WTC11 (cell line): ENCODE measurements at regions of chr16 and their contacts with region 1.

Region 1: DNA sequence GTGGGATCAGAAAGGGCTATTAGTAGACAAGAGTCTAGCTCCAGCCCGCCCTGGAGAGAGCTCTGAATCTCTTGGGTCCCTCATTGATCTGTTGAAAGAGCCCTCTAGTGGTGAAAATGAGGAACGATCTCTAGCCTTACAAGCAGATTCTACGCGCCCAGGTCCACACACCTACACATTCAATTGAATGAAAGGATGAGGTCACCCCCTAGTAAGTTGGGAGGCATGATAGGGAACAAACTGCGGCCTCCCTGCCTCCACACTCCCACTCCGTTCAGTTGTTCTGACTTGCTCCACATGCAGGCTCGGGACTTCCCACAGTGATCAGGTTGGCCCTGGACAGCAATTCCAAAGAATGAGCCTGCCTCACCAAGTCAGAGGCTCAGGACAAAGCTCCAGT is 2.9 kb upstream of the CACNG3 start:
- DNase-seq: peak; percentile 58
- ATAC-seq: peak; percentile 76
- H3K4me3 Mint-ChIP-seq: no peak overlapping the region
- H3K27ac Mint-ChIP-seq: no peak overlapping the region
- H3K4me1 Mint-ChIP-seq: peaks cover 28% of the 10 kb centered on the region
- H3K27me3 Mint-ChIP-seq: peaks cover 40% of the 10 kb centered on the region
- CTCF ChIP-seq: peak; percentile 79

Region 2: DNA sequence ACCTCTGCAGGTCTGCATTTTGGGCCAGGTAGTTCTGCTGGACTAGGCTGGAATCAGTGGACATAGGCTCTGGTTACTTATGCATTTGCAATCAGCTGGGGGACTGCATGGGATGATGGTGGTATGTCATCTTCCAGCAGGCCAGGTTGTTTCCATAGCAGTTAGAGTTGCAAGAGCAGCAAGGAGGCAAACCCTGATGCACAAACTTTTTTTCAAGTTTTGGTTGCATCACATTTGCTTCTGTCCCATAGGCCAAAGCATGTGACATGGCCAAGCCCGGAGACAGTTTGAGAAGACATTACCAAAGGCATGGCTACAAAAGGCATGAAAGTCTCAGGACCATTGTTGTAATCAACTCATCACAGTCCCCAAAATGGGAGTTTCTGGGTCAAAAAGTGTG is 359.2 kb before region 1 on chr16:
- CTCF ChIA-PET with region 1: no interaction called
- POLR2A ChIA-PET with region 1: no interaction called
- DNase-seq: no peak
- ATAC-seq: no peak
- H3K4me3 Mint-ChIP-seq: no peak overlapping the region
- H3K27ac Mint-ChIP-seq: no peak overlapping the region
- H3K4me1 Mint-ChIP-seq: no peaks in the 10 kb centered on the region
- H3K27me3 Mint-ChIP-seq: peaks cover 6% of the 10 kb centered on the region
- CTCF ChIP-seq: no peak

Region 3: DNA sequence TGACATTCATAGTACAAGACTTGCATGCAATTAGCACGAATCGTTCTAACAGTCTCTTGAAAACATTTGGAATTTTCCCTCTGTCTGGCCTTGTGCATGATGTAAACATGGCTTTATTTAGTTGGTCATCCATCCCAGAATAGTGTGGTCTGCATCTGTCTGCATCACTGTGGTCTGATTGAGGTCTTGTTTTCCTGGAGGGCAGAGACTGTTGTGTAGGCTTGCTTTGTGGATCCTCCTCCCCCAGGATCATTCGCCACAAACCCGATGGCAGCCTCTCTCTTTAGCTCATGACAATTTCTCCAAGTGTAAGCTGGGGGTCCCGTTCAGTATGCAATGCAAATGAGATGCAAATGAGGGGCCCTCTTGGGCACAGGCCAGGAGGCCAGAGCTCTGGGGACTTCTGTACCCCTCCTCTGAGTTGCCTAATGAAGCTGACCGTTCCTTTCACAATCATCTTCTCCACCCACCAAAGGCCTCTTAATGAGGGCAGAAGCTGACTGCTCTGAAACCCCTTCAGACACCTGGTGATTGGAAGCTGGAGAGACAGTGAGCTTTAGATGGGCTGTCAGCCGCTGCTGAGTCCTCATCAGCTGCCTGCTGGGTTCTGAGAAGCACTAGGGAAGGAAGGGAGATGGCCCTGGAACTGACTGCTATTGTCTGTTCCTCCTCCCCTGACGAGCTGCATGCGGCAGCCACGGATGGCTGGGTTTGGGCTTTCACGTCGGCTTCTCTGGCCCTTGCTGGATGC is 198.3 kb before region 1 on chr16:
- CTCF ChIA-PET with region 1: interaction called, 18 read pairs
- POLR2A ChIA-PET with region 1: no interaction called
- DNase-seq: peak; percentile 46
- ATAC-seq: peak; percentile 76
- H3K4me3 Mint-ChIP-seq: no peak overlapping the region
- H3K27ac Mint-ChIP-seq: peak overlapping the region; percentile 35; the same call in 1 of the 2 replicates
- H3K4me1 Mint-ChIP-seq: peaks cover 68% of the 10 kb centered on the region
- H3K27me3 Mint-ChIP-seq: no peaks in the 10 kb centered on the region; the same call in 1 of the 2 replicates
- CTCF ChIP-seq: no peak

Region 4: GRCh38 chr16:24102209-24102660 is 151.0 kb before region 1 on chr16:
- CTCF ChIA-PET with region 1: interaction called, 20 read pairs
- POLR2A ChIA-PET with region 1: no interaction called
- DNase-seq: peak; percentile 28
- ATAC-seq: peak; percentile 54
- H3K4me3 Mint-ChIP-seq: no peak overlapping the region
- H3K27ac Mint-ChIP-seq: peak overlapping the region; percentile 45; the same call in 1 of the 2 replicates
- H3K4me1 Mint-ChIP-seq: peaks cover 61% of the 10 kb centered on the region
- H3K27me3 Mint-ChIP-seq: no peaks in the 10 kb centered on the region; the same call in 1 of the 2 replicates
- CTCF ChIP-seq: no peak

Region 5: GRCh38 chr16:24163935-24164334 is 89.3 kb before region 1 on chr16:
- CTCF ChIA-PET with region 1: interaction called, 23 read pairs
- POLR2A ChIA-PET with region 1: no interaction called
- DNase-seq: no peak
- ATAC-seq: peak; percentile 66; the same call in 1 of the 2 replicates
- H3K4me3 Mint-ChIP-seq: no peak overlapping the region
- H3K27ac Mint-ChIP-seq: peak overlapping the region; percentile 73; the same call in 1 of the 2 replicates
- H3K4me1 Mint-ChIP-seq: peaks cover 25% of the 10 kb centered on the region
- H3K27me3 Mint-ChIP-seq: no peaks in the 10 kb centered on the region
- CTCF ChIP-seq: no peak

Region 6: DNA sequence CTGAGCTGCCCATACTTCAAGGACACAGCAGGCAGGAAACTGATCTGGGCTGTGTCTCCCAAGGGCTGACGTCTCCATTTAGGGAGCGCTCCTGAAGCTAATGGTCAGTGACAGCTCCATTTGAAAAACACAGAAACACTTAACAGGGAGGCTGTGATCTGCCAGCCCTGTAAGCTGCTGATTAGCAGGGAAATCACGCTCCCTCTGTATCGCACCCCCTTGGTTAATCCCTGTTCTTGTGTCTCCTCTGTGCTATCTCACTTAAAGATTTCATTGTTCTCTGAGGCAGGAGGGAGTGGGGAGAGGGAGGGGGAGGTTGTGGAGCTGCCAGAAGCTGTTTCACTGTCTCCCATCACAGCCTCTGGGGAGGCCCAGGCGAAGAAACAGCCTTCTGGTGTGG is 44.5 kb before region 1 on chr16:
- CTCF ChIA-PET with region 1: interaction called, 21 read pairs
- POLR2A ChIA-PET with region 1: interaction called, 6 read pairs
- DNase-seq: peak; percentile 14
- ATAC-seq: peak; percentile 84
- H3K4me3 Mint-ChIP-seq: no peak overlapping the region
- H3K27ac Mint-ChIP-seq: 0 out of 2 replicates have a peak overlapping the region, but pooled peaks have one; percentile 19
- H3K4me1 Mint-ChIP-seq: peaks cover 35% of the 10 kb centered on the region
- H3K27me3 Mint-ChIP-seq: no peaks in the 10 kb centered on the region
- CTCF ChIP-seq: no peak

Region 7: DNA sequence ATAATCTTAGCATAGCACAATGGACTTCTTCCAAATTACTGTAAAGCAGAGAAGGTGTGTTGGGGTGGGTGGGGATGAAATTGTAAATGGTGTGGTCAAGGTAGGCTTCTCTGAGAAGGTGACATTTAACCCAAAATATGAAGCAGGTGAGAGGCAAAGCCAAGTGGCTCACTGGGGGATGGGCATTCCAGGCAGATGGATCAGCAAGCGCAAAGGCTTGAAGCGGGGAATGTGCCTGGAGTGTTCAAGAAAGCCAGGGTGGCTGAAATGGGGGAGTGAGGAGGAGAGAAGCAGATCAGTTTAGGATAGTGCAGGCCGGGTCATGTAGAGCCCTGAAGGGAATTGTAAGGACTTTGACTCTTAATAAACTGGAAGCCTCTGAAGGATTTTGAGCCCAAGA is 17.5 kb after region 1 on chr16:
- CTCF ChIA-PET with region 1: interaction called, 13 read pairs
- POLR2A ChIA-PET with region 1: no interaction called
- DNase-seq: no peak
- ATAC-seq: no peak
- H3K4me3 Mint-ChIP-seq: no peak overlapping the region
- H3K27ac Mint-ChIP-seq: no peak overlapping the region
- H3K4me1 Mint-ChIP-seq: peaks cover 7% of the 10 kb centered on the region
- H3K27me3 Mint-ChIP-seq: peaks cover 3% of the 10 kb centered on the region
- CTCF ChIP-seq: no peak

Region 8: GRCh38 chr16:24499193-24499814 is 246.1 kb after region 1 on chr16:
- CTCF ChIA-PET with region 1: interaction called, 32 read pairs
- POLR2A ChIA-PET with region 1: interaction called, 3 read pairs
- DNase-seq: peak; percentile 75
- ATAC-seq: peak; percentile 92
- H3K4me3 Mint-ChIP-seq: no peak overlapping the region
- H3K27ac Mint-ChIP-seq: no peak overlapping the region
- H3K4me1 Mint-ChIP-seq: peaks cover 7% of the 10 kb centered on the region
- H3K27me3 Mint-ChIP-seq: no peaks in the 10 kb centered on the region; the same call in 1 of the 2 replicates
- CTCF ChIP-seq: peak; percentile 44